Activated CD4-positive, alpha-beta memory T cell treated with anti-CD3 and anti-CD28 coated beads, Interleukin-2, amount 10 ng/mL, durations not matched to agents 7 days and 5 days (primary cell): ENCODE measurements at regions of chrX and their contacts with region 1.

Region 1: GRCh38 chrX:48937054-48937907 is 18.5 kb upstream of the PIM2 start:
- DNase-seq: peak; percentile 93
- H3K4me3 Mint-ChIP-seq: peak overlapping the region; percentile 70
- H3K27ac Mint-ChIP-seq: peak overlapping the region; percentile 99
- H3K4me1 Mint-ChIP-seq: peaks cover 87% of the 10 kb centered on the region
- H3K27me3 Mint-ChIP-seq: no peaks in the 10 kb centered on the region

Region 2: GRCh38 chrX:48156014-48156413 is 781.3 kb before region 1 on chrX:
- CTCF ChIA-PET with region 1: no interaction called
- POLR2A ChIA-PET with region 1: no interaction called
- DNase-seq: no peak
- H3K4me3 Mint-ChIP-seq: no peak overlapping the region
- H3K27ac Mint-ChIP-seq: no peak overlapping the region
- H3K4me1 Mint-ChIP-seq: no peaks in the 10 kb centered on the region
- H3K27me3 Mint-ChIP-seq: peaks cover 4% of the 10 kb centered on the region

Region 3: DNA sequence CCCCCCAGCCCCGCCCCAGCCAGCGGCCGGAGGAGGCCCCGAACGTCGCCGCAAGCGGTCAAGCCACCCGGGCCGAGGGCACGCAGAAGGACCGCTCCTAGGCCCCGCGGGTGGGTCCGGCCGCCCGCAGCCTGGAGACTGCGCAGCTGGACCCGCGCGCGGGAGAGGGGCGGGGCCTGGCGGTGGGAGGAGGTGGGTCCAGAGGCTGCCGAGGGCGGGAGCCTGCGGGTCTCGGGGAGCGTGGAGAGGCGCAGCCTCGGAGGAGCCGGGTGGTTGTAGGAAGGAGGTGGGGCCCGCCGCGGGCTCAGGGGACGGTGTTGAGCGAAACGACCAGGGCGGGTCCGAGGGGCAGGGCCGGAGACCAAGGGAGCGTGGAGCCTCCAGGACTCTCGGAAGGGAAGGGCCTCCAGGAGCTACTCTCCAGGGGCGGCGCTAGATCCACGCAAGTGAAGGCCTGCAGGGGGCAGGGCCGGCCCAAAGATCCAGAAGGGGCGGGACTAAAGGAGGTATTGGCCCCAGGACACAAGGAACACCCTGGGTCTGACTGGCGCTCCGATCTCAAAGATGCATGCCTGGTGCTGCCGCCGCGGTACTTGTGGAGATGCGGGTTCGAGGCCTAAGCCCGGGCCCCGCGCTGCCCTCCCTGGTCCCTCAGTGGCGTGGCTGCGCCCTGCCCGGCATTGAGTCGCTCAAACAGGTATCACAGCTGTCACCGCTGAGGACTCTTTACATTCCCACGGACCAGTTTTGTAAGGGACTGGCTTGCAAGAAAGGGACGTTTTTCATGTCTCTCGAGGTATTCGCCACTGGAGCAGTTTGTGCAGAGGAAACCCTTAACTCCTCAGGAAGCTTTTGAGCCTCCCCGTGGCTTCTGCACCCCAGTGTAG is 45.6 kb before region 1 on chrX:
- CTCF ChIA-PET with region 1: interaction called, 10 read pairs
- POLR2A ChIA-PET with region 1: interaction called, 5 read pairs
- DNase-seq: peak; percentile 84
- H3K4me3 Mint-ChIP-seq: peak overlapping the region; percentile 84
- H3K27ac Mint-ChIP-seq: peak overlapping the region; percentile 58
- H3K4me1 Mint-ChIP-seq: peaks cover 31% of the 10 kb centered on the region
- H3K27me3 Mint-ChIP-seq: no peaks in the 10 kb centered on the region

Region 4: DNA sequence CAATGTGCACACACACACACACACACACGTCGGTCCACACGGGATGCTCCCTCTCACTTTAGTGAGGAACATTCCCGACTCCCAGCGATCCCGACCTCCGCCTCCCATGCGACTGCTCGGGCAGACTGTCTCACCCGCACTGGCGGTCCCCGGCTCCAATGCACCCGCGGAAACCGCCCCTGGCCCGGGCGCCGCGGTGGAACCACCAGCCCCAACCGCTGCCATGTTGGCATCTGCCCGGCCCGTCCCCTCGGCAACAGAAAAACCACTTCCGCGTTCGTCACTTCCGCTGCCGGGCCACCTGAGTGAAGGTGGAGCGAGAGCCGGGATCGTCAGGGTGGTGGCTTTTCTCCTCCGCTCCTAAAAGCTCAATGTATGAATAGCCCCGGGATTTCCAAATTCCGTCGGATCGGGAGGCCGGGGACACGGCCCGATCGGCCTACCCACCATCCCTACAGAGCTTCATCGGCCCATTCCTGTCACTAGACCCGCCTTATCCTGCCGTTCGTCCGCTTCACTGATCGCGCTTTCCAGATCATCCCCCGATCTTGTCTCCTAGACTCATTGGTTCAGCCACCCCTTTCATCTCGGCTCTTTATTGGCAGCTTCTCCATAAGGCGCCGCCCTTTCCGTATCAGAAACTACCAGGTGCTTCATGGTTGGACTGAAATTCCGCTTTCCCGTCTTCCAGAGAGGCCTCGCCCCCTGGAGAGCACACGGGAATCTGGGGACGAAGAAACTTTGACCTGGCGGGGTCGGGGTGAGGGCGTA is 25.7 kb before region 1 on chrX and contains the start of gene SLC35A2:
- CTCF ChIA-PET with region 1: interaction called, 11 read pairs
- POLR2A ChIA-PET with region 1: interaction called, 415 read pairs
- DNase-seq: peak; percentile 90
- H3K4me3 Mint-ChIP-seq: peak within 1 kb of the TSS; percentile 95
- H3K27ac Mint-ChIP-seq: peak within 1 kb of the TSS; percentile 92
- H3K4me1 Mint-ChIP-seq: peaks cover 48% of the 10 kb centered on the region
- H3K27me3 Mint-ChIP-seq: no peaks in the 10 kb centered on the region
- total RNA-seq, gene SLC35A2: 17.9 to 18.3 TPM

Region 5: GRCh38 chrX:48917139-48918001 is 19.9 kb before region 1 on chrX:
- CTCF ChIA-PET with region 1: interaction called, 14 read pairs
- POLR2A ChIA-PET with region 1: interaction called, 415 read pairs
- DNase-seq: peak; percentile 92
- H3K4me3 Mint-ChIP-seq: peak overlapping the region; percentile 95
- H3K27ac Mint-ChIP-seq: peak overlapping the region; percentile 98
- H3K4me1 Mint-ChIP-seq: peaks cover 55% of the 10 kb centered on the region
- H3K27me3 Mint-ChIP-seq: no peaks in the 10 kb centered on the region